IMR-90 (cell line): ENCODE measurements at regions of chr14 and their contacts with region 1.

Region 1: GRCh38 chr14:88792572-88793258 is at the start of gene EML5:
- DNase-seq: peak; percentile 73
- ATAC-seq: peak; percentile 96
- H3K4me3 ChIP-seq: peak within 1 kb of the TSS; percentile 91
- H3K27ac ChIP-seq: peak within 1 kb of the TSS; percentile 58; the same call in 1 of the 2 replicates
- H3K4me1 ChIP-seq: 0 out of 2 replicates have a peak, but pooled peaks cover 1% of the 10 kb centered on the region
- H3K27me3 ChIP-seq: no peaks in the 10 kb centered on the region; the same call in 1 of the 2 replicates
- CTCF ChIP-seq: peak; percentile 37; the same call in 1 of the 2 replicates
- POLR2A ChIP-seq: no peak
- RAD21 ChIP-seq: peak; percentile 50
- total RNA-seq, gene EML5: 22.2 and 34.7 TPM in 2 replicates

Region 2: GRCh38 chr14:88621100-88621499 is 171.6 kb before region 1 on chr14:
- CTCF ChIA-PET with region 1: interaction called, 11 read pairs
- POLR2A ChIA-PET with region 1: no interaction called
- dilution Hi-C with region 1: no loop called
- in situ Hi-C with region 1: no loop called
- intact Hi-C with region 1: no loop called
- DNase-seq: peak; percentile 21
- ATAC-seq: peak; percentile 81
- H3K4me3 ChIP-seq: no peak overlapping the region
- H3K27ac ChIP-seq: no peak overlapping the region
- H3K4me1 ChIP-seq: no peaks in the 10 kb centered on the region
- H3K27me3 ChIP-seq: no peaks in the 10 kb centered on the region
- CTCF ChIP-seq: no peak
- POLR2A ChIP-seq: no peak
- RAD21 ChIP-seq: no peak

Region 3: DNA sequence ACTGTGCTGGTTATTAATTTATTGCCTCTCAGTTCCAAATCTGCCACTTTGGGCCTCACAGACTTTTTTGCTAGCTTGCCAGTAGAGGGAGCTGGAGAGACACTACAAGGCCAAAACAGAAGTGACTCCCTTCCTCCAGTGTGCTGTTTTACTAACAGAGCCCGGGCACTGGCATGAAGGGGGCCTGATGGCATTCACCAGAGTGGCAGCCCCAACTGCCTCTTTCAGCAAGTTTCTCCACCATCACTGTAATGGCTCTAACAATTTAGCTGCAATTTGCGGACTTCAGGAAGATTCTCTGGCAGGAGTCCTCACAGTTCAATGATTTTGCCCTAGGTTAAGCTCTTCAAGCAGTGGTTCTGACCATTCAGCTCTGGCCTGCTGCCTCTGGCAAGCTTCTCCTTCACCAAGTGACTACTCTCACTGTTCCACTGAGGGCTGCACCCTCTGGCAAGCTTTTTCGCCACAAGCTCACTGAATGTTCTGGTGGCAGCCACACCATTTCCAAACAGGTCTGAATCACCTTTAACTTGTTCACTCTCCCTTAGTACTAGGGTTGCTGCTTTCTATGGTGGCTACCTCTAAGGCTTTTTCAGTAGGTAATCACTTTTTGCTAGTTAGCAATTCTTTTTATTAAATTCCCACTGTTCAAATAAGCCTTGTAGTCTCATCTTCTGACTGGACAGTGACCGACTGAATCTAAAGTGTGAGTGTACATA is 125.0 kb before region 1 on chr14:
- CTCF ChIA-PET with region 1: interaction called, 8 read pairs
- POLR2A ChIA-PET with region 1: no interaction called
- dilution Hi-C with region 1: no loop called
- in situ Hi-C with region 1: no loop called
- intact Hi-C with region 1: loop called (anchors 1 kb)
- DNase-seq: peak; percentile 83
- ATAC-seq: peak; percentile 98
- H3K4me3 ChIP-seq: no peak overlapping the region
- H3K27ac ChIP-seq: no peak overlapping the region
- H3K4me1 ChIP-seq: 0 out of 2 replicates have a peak, but pooled peaks cover 3% of the 10 kb centered on the region
- H3K27me3 ChIP-seq: no peaks in the 10 kb centered on the region
- CTCF ChIP-seq: peak; percentile 91
- POLR2A ChIP-seq: no peak
- RAD21 ChIP-seq: peak; percentile 89

Region 4: DNA sequence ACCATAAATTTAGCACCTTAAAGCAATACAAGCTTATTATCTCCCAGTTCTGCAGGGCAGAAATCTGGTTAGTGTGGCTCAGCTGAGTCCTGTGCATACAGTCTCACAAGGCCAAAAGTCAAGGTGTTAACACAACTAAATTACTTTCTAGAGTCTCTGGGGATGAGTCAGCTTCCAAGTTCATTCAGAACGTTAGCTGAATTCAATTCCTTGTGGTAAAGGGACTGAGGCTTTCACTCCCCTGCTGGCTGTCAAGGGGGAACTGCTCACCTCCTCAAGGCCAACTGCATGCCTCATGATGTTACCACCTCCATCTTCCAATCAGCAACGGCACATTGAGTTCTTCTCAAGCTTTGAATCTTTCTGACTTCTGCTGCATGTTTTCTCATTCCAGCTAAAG is 27.6 kb before region 1 on chr14:
- CTCF ChIA-PET with region 1: interaction called, 4 read pairs
- POLR2A ChIA-PET with region 1: no interaction called
- dilution Hi-C with region 1: no loop called
- in situ Hi-C with region 1: no loop called
- intact Hi-C with region 1: loop called (anchors 2 kb)
- DNase-seq: peak; percentile 82
- ATAC-seq: peak; percentile 64
- H3K4me3 ChIP-seq: no peak overlapping the region
- H3K27ac ChIP-seq: no peak overlapping the region
- H3K4me1 ChIP-seq: no peaks in the 10 kb centered on the region; the same call in 1 of the 2 replicates
- H3K27me3 ChIP-seq: no peaks in the 10 kb centered on the region
- CTCF ChIP-seq: 0 out of 2 replicates have a peak, but pooled peaks have one; percentile 5
- POLR2A ChIP-seq: no peak
- RAD21 ChIP-seq: no peak

Region 5: GRCh38 chr14:88995437-88996198 is 202.9 kb after region 1 on chr14:
- CTCF ChIA-PET with region 1: no interaction called
- POLR2A ChIA-PET with region 1: no interaction called
- dilution Hi-C with region 1: no loop called
- in situ Hi-C with region 1: no loop called
- intact Hi-C with region 1: loop called (anchors 2 kb)
- DNase-seq: peak; percentile 94
- ATAC-seq: peak; percentile 59
- H3K4me3 ChIP-seq: no peak overlapping the region
- H3K27ac ChIP-seq: peak overlapping the region; percentile 62
- H3K4me1 ChIP-seq: peaks cover 17% of the 10 kb centered on the region
- H3K27me3 ChIP-seq: no peaks in the 10 kb centered on the region
- CTCF ChIP-seq: no peak
- POLR2A ChIP-seq: no peak
- RAD21 ChIP-seq: no peak